CD14-positive monocyte (primary cell): ENCODE measurements at regions of chr7 and their contacts with region 1.

Region 1: DNA sequence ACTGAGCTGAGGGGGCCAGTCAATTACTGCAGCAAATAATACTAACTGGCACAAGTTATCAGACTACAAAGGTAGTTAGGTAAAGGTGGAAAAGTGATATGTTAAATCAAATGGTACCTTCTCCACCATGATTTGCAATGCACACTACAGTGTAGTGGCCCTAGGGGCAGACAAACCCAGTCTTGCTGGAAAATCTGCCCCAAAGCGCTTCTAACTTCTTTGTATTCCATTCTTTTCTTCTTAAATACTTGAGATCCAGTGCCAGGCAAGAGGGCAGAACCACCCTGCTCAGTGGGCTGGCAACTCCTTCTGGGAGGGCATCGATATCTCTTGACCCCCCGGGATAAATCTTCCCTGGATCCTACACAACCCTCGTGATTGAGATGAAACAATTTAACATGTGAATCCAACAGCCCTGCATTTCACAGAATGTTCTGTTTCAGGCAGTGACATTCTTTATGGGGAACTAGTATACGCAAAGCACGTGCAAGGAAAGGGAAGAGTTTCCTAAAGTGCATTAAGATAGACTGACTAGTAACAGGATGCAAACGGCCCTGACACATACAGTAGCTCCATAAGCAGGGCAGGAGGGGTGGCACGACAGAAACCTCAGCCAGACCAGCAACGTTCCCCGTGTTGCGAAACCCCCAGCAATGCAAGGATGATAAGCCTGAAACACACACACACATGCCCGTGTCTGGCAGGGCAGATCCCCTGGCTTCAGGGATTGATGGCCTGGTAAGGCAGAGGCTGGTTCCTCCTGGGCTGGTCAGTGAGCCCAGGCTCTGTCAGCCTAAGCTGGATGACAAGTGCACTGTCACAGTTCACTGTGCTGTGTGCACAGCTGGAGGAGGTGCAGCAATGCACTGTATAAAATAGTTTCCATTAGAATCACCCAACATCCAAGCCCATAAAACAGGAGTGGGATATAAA is 89.2 kb downstream of the GSAP start:
- DNase-seq: peak; percentile 77 to 98 (median 86)
- H3K4me3 ChIP-seq: peak overlapping the region in 1 of 3 experiments; percentile 3
- H3K4me3 Mint-ChIP-seq: peak overlapping the region in 1 of 2 donors; percentile 46
- H3K27ac ChIP-seq: peak overlapping the region; percentile 38 to 42
- H3K27ac Mint-ChIP-seq: peak overlapping the region; percentile 54 to 92 (median 82)
- H3K4me1 ChIP-seq: peaks cover 50 to 56% of the 10 kb centered on the region in 2 donors
- H3K4me1 Mint-ChIP-seq: peaks cover 59% of the 10 kb centered on the region
- H3K27me3 ChIP-seq: no peaks in the 10 kb centered on the region
- H3K27me3 Mint-ChIP-seq: peaks cover 0 to 2% (median 0%) of the 10 kb centered on the region in 3 donors
- CTCF ChIP-seq: no peak

Region 2: DNA sequence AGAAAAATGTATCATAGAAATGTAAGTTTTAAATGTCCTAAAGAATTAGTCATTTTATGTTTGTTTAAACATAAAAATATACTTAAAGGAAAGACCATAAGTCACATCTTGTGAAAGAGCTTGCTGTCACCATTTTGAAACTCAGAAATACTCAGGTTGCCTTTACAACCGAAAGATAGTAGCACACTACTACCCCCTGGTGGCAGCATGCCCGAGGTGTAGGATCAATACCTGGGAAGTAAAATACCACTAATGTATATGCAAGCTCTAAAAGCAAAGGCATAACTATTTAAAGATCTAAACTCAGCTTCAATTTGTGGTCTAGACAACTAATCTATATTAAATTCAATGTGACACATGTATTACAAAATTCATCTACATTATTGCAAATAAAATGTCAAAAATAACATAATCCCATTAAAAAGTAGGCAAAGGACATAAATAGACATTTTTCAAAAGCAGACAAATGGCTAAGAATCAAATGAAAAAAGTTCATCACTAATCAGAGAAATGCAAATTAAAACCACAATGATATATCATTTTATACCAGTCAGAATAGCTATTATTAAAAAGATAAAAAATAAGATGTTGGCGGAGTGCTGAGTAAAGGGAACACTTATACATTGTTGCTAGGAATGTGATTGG is 79.6 kb before region 1 on chr7:
- intact Hi-C with region 1: loop called in 1 of 2 experiments (anchors 5 kb)
- DNase-seq: peak; percentile 73 to 89 (median 88)
- H3K4me3 ChIP-seq: peak overlapping the region in 1 of 3 experiments; percentile 61
- H3K4me3 Mint-ChIP-seq: no peak overlapping the region
- H3K27ac ChIP-seq: peak overlapping the region in 1 of 2 donors; percentile 45
- H3K27ac Mint-ChIP-seq: no peak overlapping the region
- H3K4me1 ChIP-seq: peaks cover 28 to 40% of the 10 kb centered on the region in 2 donors
- H3K4me1 Mint-ChIP-seq: peaks cover 28% of the 10 kb centered on the region
- H3K27me3 ChIP-seq: no peaks in the 10 kb centered on the region
- H3K27me3 Mint-ChIP-seq: no peaks in the 10 kb centered on the region
- CTCF ChIP-seq: peak; percentile 99

Region 3: DNA sequence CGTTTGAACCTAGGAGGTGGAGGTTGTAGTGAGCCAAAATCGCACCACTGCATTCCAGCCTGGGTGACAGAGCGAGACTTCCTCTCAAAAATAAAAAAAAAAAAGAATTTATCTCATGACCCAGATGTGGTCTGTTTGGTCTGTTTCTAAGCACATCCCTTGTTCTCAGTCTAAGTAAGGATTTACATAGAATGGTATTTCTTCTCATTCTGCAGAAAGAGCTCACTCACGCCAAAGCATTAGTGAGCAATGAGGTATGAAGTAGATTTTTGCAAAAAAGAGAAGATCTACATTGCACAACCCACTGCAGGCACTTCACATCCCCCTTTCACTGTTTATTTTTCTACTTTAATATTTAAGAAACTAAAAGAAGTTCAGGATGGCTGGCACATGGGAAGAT is 50.8 kb before region 1 on chr7:
- intact Hi-C with region 1: no loop called
- DNase-seq: peak; percentile 10 to 23 (median 14)
- H3K4me3 ChIP-seq: no peak overlapping the region
- H3K4me3 Mint-ChIP-seq: no peak overlapping the region
- H3K27ac ChIP-seq: no peak overlapping the region
- H3K27ac Mint-ChIP-seq: peak overlapping the region in 2 of 7 donors; percentile 37 to 43
- H3K4me1 ChIP-seq: peaks cover 15 to 18% of the 10 kb centered on the region in 2 donors
- H3K4me1 Mint-ChIP-seq: peaks cover 18% of the 10 kb centered on the region
- H3K27me3 ChIP-seq: no peaks in the 10 kb centered on the region
- H3K27me3 Mint-ChIP-seq: peaks cover 0 to 2% (median 0%) of the 10 kb centered on the region in 3 donors
- CTCF ChIP-seq: no peak